Prostate gland (tissue), 2 donors: ENCODE measurements at regions of chr22 and their contacts with region 1.

Region 1: DNA sequence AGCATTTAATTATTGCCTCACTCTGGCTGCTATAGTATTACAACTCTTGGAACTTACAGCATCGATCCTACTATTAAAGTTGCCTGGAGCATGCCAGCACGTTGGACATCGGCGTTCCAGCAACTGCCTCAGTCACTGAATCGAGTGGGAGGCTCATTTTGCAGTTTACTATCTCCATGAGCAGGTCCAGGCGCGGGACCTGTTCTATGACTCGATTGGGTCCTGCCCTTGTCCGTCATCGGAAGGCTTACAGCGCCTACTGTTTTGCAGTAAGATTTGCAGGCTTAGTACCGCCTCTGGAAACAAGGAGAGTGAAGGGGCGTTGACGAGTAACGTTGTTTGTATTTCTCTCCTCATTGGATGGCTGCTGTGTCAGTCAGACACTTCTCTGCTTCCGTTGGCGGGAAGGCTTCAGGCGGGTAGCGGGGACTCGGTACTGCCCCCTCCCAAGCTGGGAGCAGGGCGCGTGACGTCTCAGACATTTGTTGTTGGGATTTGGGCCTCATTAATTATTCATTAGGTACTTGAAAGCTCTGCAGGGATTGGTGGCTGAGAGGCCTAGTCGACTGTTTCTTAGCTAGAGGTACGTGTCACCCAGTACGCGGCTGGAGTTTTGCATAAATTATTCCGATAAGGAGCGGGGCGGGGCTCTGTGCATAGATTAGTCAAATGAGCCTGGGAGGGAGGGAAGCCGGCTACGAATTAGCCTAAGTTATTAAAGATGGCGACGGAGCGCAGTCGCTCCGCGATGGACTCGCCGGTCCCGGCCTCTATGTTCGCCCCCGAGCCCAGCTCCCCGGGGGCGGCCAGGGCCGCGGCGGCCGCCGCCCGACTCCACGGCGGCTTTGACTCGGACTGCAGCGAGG is at the start of gene GTPBP1:
- DNase-seq: peak; percentile 100
- H3K4me3 ChIP-seq: peak within 1 kb of the TSS; percentile 97 to 99
- H3K27ac ChIP-seq: peak within 1 kb of the TSS; percentile 98 to 99
- H3K4me1 ChIP-seq: peaks cover 11% of the 10 kb centered on the region
- H3K27me3 ChIP-seq: no peaks in the 10 kb centered on the region
- CTCF ChIP-seq: peak in 1 of 4 experiments; percentile 41
- POLR2A ChIP-seq: peak; percentile 100
- total RNA-seq, gene GTPBP1: 61.9 to 74.5 TPM

Region 2: GRCh38 chr22:38506118-38506962 is 199.1 kb before region 1 on chr22 and contains the start of gene DDX17:
- intact Hi-C with region 1: loop called (anchors 10 kb)
- DNase-seq: peak; percentile 96
- H3K4me3 ChIP-seq: peak within 1 kb of the TSS; percentile 87 to 88
- H3K27ac ChIP-seq: peak within 1 kb of the TSS; percentile 100
- H3K4me1 ChIP-seq: no peaks in the 10 kb centered on the region
- H3K27me3 ChIP-seq: no peaks in the 10 kb centered on the region
- CTCF ChIP-seq: peak in 2 of 4 experiments; percentile 18 to 25
- POLR2A ChIP-seq: peak; percentile 65
- total RNA-seq, gene DDX17: 374 to 600 TPM

Region 3: GRCh38 chr22:38755911-38756532 is 50.6 kb after region 1 on chr22 and contains the start of gene SUN2:
- intact Hi-C with region 1: loop called (anchors 2 kb)
- DNase-seq: peak; percentile 95
- H3K4me3 ChIP-seq: peak within 1 kb of the TSS; percentile 73 to 82
- H3K27ac ChIP-seq: peak within 1 kb of the TSS; percentile 97 to 99
- H3K4me1 ChIP-seq: peaks cover 20% of the 10 kb centered on the region
- H3K27me3 ChIP-seq: no peaks in the 10 kb centered on the region
- CTCF ChIP-seq: no peak
- POLR2A ChIP-seq: peak; percentile 80
- total RNA-seq, gene SUN2: 401 to 445 TPM